ENCODE measurements at regions of chr12 and their contacts with region 1.

Region 1: DNA sequence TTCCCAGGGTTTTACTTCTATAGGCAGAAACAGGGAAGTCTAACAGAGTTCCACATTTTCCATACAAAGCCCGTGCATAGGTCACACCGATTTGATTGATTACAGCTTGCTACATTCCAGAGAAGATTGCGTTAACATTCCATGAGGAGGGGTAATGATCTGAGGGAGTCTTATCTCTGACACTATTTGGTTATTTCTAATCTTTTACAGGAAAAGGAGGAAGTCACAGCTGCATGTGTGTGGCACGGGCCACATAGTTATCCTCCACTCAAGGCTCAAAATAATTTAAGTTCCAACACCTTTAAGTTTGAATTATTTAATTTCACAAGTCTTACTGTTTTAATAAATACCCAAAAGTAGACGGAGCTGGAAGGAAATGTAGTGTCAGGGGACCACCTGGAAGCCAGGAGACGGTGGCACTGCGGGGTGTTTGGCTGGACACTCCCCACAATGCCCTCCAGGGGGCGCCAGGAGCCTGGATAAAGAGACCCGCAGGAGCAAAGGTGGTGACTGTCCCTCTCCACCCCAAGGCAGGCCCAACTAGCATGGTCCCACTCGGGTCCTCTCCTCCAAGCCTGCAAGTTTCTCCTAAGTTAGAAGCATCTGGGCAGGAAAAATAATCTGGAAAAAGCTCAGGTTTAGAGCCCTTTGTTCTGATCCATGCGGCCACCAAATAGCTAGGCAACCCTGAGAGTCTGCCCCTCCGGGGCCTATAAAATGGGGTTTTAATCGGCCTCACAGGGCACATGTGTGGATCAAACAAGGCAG is 20.2 kb downstream of the KRT8 start:
- DNase-seq: peak; percentile 51 to 83 (median 74)
- H3K4me3 ChIP-seq: no peak overlapping the region
- H3K27ac ChIP-seq: no peak overlapping the region
- H3K27me3 ChIP-seq: peaks cover 0 to 9% (median 0%) of the 10 kb centered on the region in 45 donors
- CTCF ChIP-seq: peak; percentile 68 to 98 (median 89)

Region 2: DNA sequence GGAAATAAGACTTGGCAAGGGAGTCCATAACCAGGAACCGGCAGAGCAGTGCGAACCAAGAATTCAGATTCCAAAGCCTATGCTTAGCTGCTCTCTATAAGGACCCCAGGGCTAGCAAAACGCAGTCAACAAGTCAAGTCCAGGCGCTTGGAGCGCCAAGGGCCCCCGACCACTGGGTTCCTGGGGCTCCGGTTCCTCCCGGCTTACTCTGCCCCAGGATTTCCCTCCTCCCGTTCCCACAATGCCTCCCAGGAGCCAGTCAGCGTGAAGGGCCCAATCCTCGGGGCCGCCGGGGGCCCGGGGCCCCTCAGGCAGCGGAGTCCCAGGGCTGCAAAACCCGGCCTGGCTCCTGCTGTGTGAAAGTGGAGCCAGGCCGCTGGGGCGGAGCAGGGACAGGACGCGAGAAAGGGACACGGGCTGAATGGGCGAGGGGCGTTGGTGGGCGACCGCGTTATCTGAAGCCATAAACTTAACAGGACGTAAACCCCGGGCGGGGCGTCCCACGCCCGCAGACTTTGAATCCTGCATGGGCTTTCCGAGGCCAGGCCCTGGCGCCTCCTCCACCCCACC is 18.7 kb after region 1 on chr12:
- intact Hi-C with region 1: no loop called
- DNase-seq: peak in 5 of 10 donors; percentile 23 to 58 (median 39)
- H3K4me3 ChIP-seq: peak overlapping the region in 56 of 59 donors; percentile 4 to 63 (median 35)
- H3K27ac ChIP-seq: no peak overlapping the region
- H3K27me3 ChIP-seq: peaks cover 0 to 37% (median 5%) of the 10 kb centered on the region in 45 donors
- CTCF ChIP-seq: no peak

Region 3: GRCh38 chr12:52980693-52981423 is 96.1 kb after region 1 on chr12:
- intact Hi-C with region 1: loop called (anchors 2 kb)
- DNase-seq: peak; percentile 76 to 93 (median 84)
- H3K4me3 ChIP-seq: no peak overlapping the region
- H3K27ac ChIP-seq: no peak overlapping the region
- H3K27me3 ChIP-seq: peaks cover 0 to 4% (median 0%) of the 10 kb centered on the region in 45 donors
- CTCF ChIP-seq: peak; percentile 84 to 100 (median 98)

Measured in dorsolateral prefrontal cortex (tissue), 120 donors.